K562 (cell line): ENCODE measurements at regions of chr15 and their contacts with region 1.

Region 1: GRCh38 chr15:77186594-77187011 is 115.7 kb upstream of the TSPAN3 start:
- DNase-seq: peak in 3 of 4 experiments; percentile 13 to 45 (median 27)
- ATAC-seq: peak; percentile 50; the same call in 1 of the 3 replicates
- H3K4me3 ChIP-seq: no peak overlapping the region
- H3K27ac ChIP-seq: no peak overlapping the region
- H3K4me1 ChIP-seq: peaks cover 0 to 25% of the 10 kb centered on the region in 2 experiments; a peak in 3 of 5 replicates
- H3K27me3 ChIP-seq: no peaks in the 10 kb centered on the region
- CTCF ChIP-seq: peak; percentile 55 to 74 (median 59); a peak in 5 of 6 replicates
- EP300 ChIP-seq: no peak
- POLR2A ChIP-seq: no peak
- RAD21 ChIP-seq: peak; percentile 82 to 86

Region 2: GRCh38 chr15:77118882-77119321 is 67.7 kb before region 1 on chr15:
- CTCF ChIA-PET with region 1: no interaction called
- POLR2A ChIA-PET with region 1: no interaction called
- in situ Hi-C with region 1: no loop called
- intact Hi-C with region 1: loop called (anchors 2 kb)
- DNase-seq: peak in 2 of 4 experiments; percentile 37 to 55
- ATAC-seq: peak; percentile 69
- H3K4me3 ChIP-seq: no peak overlapping the region
- H3K27ac ChIP-seq: no peak overlapping the region
- H3K4me1 ChIP-seq: no peaks in the 10 kb centered on the region
- H3K27me3 ChIP-seq: no peaks in the 10 kb centered on the region
- CTCF ChIP-seq: peak; percentile 34 to 76 (median 57); a peak in 5 of 6 replicates
- EP300 ChIP-seq: no peak
- POLR2A ChIP-seq: no peak
- RAD21 ChIP-seq: peak; percentile 37 to 72; a peak in 3 of 4 replicates

Region 3: GRCh38 chr15:77239882-77240608 is 53.4 kb after region 1 on chr15:
- CTCF ChIA-PET with region 1: no interaction called
- POLR2A ChIA-PET with region 1: no interaction called
- in situ Hi-C with region 1: no loop called
- intact Hi-C with region 1: no loop called
- DNase-seq: no peak
- ATAC-seq: no peak
- H3K4me3 ChIP-seq: no peak overlapping the region
- H3K27ac ChIP-seq: no peak overlapping the region
- H3K4me1 ChIP-seq: no peaks in the 10 kb centered on the region
- H3K27me3 ChIP-seq: no peaks in the 10 kb centered on the region
- CTCF ChIP-seq: no peak
- EP300 ChIP-seq: no peak
- POLR2A ChIP-seq: no peak
- RAD21 ChIP-seq: no peak